CD4-positive, alpha-beta memory T cell (primary cell): ENCODE measurements at regions of chr19 and their contacts with region 1.

Region 1: GRCh38 chr19:49468746-49469447 is 5.1 kb upstream of the FLT3LG start:
- DNase-seq: peak; percentile 96 to 99 (median 98)
- H3K4me3 ChIP-seq: peak overlapping the region in 1 of 2 donors; percentile 44
- H3K4me3 Mint-ChIP-seq: peak overlapping the region; percentile 67 to 94 (median 80)
- H3K27ac ChIP-seq: peak overlapping the region; percentile 84
- H3K27ac Mint-ChIP-seq: peak overlapping the region; percentile 94 to 100 (median 100)
- H3K4me1 ChIP-seq: peaks cover 71% of the 10 kb centered on the region
- H3K4me1 Mint-ChIP-seq: peaks cover 24 to 61% (median 40%) of the 10 kb centered on the region in 4 donors
- H3K27me3 ChIP-seq: no peaks in the 10 kb centered on the region
- H3K27me3 Mint-ChIP-seq: no peaks in the 10 kb centered on the region

Region 2: GRCh38 chr19:49224856-49225255 is 244.0 kb before region 1 on chr19:
- CTCF ChIA-PET with region 1: interaction called, 4 read pairs
- POLR2A ChIA-PET with region 1: interaction called, 4 read pairs
- intact Hi-C with region 1: loop called (anchors 2 kb)
- DNase-seq: no peak
- H3K4me3 ChIP-seq: no peak overlapping the region
- H3K4me3 Mint-ChIP-seq: no peak overlapping the region
- H3K27ac ChIP-seq: no peak overlapping the region
- H3K27ac Mint-ChIP-seq: peak overlapping the region in 1 of 7 donors; percentile 73
- H3K4me1 ChIP-seq: peaks cover 8% of the 10 kb centered on the region
- H3K4me1 Mint-ChIP-seq: peaks cover 4 to 9% (median 5%) of the 10 kb centered on the region in 4 donors
- H3K27me3 ChIP-seq: no peaks in the 10 kb centered on the region
- H3K27me3 Mint-ChIP-seq: peaks cover 6% of the 10 kb centered on the region in 2 donors

Region 3: GRCh38 chr19:49443366-49444099 is 25.4 kb before region 1 on chr19:
- CTCF ChIA-PET with region 1: interaction called, 227 read pairs
- POLR2A ChIA-PET with region 1: interaction called, 26 read pairs
- intact Hi-C with region 1: loop called (anchors 1 kb)
- DNase-seq: peak; percentile 93 to 95 (median 94)
- H3K4me3 ChIP-seq: peak overlapping the region in 1 of 2 donors; percentile 72
- H3K4me3 Mint-ChIP-seq: peak overlapping the region; percentile 78 to 93 (median 82)
- H3K27ac ChIP-seq: peak overlapping the region; percentile 25
- H3K27ac Mint-ChIP-seq: peak overlapping the region; percentile 88 to 96 (median 93)
- H3K4me1 ChIP-seq: peaks cover 31% of the 10 kb centered on the region
- H3K4me1 Mint-ChIP-seq: peaks cover 18 to 56% (median 34%) of the 10 kb centered on the region in 4 donors
- H3K27me3 ChIP-seq: peaks cover 36% of the 10 kb centered on the region
- H3K27me3 Mint-ChIP-seq: peaks cover 31 to 41% of the 10 kb centered on the region in 2 donors

Region 4: GRCh38 chr19:49458567-49458903 is 10.4 kb before region 1 on chr19:
- CTCF ChIA-PET with region 1: interaction called, 227 read pairs
- POLR2A ChIA-PET with region 1: interaction called, 222 read pairs
- intact Hi-C with region 1: loop called (anchors 1 kb)
- DNase-seq: no peak
- H3K4me3 ChIP-seq: no peak overlapping the region
- H3K4me3 Mint-ChIP-seq: peak overlapping the region in 1 of 8 donors; percentile 41
- H3K27ac ChIP-seq: peak overlapping the region; percentile 33
- H3K27ac Mint-ChIP-seq: peak overlapping the region; percentile 60 to 85 (median 78)
- H3K4me1 ChIP-seq: peaks cover 29% of the 10 kb centered on the region
- H3K4me1 Mint-ChIP-seq: peaks cover 9 to 38% (median 20%) of the 10 kb centered on the region in 4 donors
- H3K27me3 ChIP-seq: no peaks in the 10 kb centered on the region
- H3K27me3 Mint-ChIP-seq: no peaks in the 10 kb centered on the region

Region 5: DNA sequence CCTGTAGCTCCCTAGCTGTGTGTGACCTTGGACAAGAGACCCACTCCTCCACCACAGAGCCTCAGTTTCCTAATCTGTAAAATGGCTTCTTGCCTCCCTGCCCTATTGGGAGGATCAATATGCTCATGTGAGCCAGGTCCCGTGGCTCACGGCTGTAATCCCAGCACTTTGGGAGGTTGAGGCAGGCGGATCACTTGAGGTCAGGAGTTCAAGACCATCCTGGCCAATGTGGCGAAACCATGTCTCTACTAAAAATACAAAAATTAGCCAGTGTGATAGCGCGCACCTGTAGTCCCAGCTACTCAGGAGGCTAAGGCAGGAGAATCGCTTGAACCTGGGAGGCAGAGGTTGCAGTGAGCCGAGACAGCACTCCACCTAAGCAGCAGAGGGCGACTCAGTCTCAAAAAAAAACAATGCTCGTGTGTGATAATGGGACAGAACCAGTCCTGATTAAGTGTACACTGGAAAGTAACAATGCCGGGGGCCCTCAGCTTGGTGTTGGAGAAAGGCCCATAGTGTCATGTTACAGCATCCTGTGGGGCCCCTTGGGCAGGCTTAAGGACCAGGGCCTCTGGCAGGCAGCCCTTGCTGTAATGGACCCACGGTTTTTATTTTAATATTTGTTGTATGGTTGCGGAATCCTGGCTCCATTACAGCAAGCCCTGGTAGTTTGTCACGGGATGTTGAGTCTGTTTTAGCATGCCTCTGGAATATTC is 34.1 kb after region 1 on chr19:
- CTCF ChIA-PET with region 1: interaction called, 14 read pairs
- POLR2A ChIA-PET with region 1: interaction called, 3 read pairs
- intact Hi-C with region 1: no loop called
- DNase-seq: peak; percentile 65 to 79 (median 74)
- H3K4me3 ChIP-seq: no peak overlapping the region
- H3K4me3 Mint-ChIP-seq: peak overlapping the region; percentile 6 to 100 (median 36)
- H3K27ac ChIP-seq: peak overlapping the region; percentile 95
- H3K27ac Mint-ChIP-seq: peak overlapping the region; percentile 91 to 100 (median 99)
- H3K4me1 ChIP-seq: peaks cover 52% of the 10 kb centered on the region
- H3K4me1 Mint-ChIP-seq: peaks cover 16 to 61% (median 33%) of the 10 kb centered on the region in 4 donors
- H3K27me3 ChIP-seq: no peaks in the 10 kb centered on the region
- H3K27me3 Mint-ChIP-seq: no peaks in the 10 kb centered on the region